ENCODE measurements at regions of chr22 and their contacts with region 1.

Region 1: GRCh38 chr22:41381329-41382097 is at the start of gene TEF:
- DNase-seq: peak; percentile 97
- H3K4me3 Mint-ChIP-seq: peak within 1 kb of the TSS; percentile 85
- H3K27ac Mint-ChIP-seq: peak within 1 kb of the TSS; percentile 93
- H3K4me1 Mint-ChIP-seq: peaks cover 6% of the 10 kb centered on the region
- H3K27me3 Mint-ChIP-seq: no peaks in the 10 kb centered on the region
- total RNA-seq, gene TEF: 1.6 and 2.1 TPM in 2 replicates

Region 2: GRCh38 chr22:41009202-41009943 is 372.1 kb before region 1 on chr22:
- intact Hi-C with region 1: no loop called
- DNase-seq: no peak
- H3K4me3 Mint-ChIP-seq: no peak overlapping the region
- H3K27ac Mint-ChIP-seq: no peak overlapping the region
- H3K4me1 Mint-ChIP-seq: no peaks in the 10 kb centered on the region
- H3K27me3 Mint-ChIP-seq: peaks cover 5% of the 10 kb centered on the region

Region 3: GRCh38 chr22:41204992-41205900 is 176.3 kb before region 1 on chr22 and contains the start of gene L3MBTL2:
- intact Hi-C with region 1: loop called (anchors 1 kb)
- DNase-seq: peak; percentile 98
- H3K4me3 Mint-ChIP-seq: peak within 1 kb of the TSS; percentile 97
- H3K27ac Mint-ChIP-seq: peak within 1 kb of the TSS; percentile 94
- H3K4me1 Mint-ChIP-seq: peaks cover 21% of the 10 kb centered on the region
- H3K27me3 Mint-ChIP-seq: peaks cover 12% of the 10 kb centered on the region
- total RNA-seq, gene L3MBTL2: 51.9 and 56.6 TPM in 2 replicates

Region 4: DNA sequence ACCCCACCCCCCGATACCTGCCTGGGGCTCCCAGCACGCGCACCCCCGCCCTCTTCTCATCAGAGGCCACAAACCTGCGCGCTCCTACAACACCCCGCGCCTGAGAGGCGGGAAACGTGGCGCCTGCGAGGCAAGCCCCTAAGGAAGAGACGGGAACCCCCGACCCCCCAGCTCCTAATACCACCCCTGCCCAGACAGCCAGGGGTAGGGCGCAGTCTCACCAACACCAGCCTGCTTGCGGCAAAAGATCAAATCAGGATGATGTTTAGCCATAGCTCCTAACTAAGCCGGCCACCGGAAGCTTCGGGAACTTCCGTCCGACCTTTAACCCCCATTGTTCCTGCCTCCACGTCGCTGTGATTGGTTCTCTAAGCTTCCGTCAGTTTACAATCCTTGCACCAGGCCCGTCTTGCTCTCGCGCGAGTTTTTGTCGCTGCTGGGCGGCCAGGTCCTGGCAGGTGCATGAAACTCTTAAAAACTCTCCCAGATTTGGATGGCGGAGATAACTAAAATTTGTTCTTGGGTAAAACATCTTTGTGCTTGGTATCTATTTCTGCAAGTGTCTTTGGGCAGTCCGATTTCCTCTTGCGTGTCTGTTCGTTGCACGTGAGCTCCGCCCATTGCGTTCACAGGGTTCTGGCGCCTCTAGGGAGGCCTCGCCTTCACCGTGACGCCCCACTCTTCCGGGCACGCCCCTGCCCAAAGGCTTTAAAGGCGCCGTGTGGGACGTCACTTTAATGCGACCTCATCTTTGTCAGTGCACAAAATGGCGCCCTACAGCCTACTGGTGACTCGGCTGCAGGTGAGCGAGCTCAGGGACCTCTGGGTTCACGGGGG is 87.1 kb after region 1 on chr22 and contains the starts of genes ACO2 and PHF5A:
- intact Hi-C with region 1: loop called (anchors 1 kb)
- DNase-seq: peak; percentile 98
- H3K4me3 Mint-ChIP-seq: peak within 1 kb of the TSS; percentile 87
- H3K27ac Mint-ChIP-seq: peak within 1 kb of the TSS; percentile 99
- H3K4me1 Mint-ChIP-seq: peaks cover 22% of the 10 kb centered on the region
- H3K27me3 Mint-ChIP-seq: no peaks in the 10 kb centered on the region
- total RNA-seq, gene ACO2: 99.1 and 101 TPM in 2 replicates
- total RNA-seq, gene PHF5A: 83.7 and 96.8 TPM in 2 replicates

Region 5: DNA sequence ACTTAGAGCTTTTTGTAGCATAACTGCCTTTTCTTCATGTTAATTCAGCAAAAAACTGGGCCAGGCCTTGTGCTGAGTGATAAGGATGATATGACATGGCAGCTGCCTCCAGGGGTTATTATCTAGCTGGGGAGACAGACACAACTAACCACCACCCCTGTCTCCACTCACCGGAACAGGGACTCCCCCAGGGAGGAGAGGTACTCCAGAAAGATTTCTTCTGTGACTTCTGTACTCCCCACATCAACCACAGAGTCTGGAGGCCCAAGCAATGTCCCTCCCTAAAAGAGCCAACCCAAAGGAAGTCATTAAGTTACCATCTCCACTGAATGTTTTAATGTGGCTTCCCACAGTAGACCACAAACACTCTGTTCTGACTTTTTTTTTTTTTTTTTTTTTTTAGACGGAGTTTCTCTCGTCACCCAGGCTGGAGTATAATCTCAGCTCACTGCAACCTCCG is 222.4 kb after region 1 on chr22:
- intact Hi-C with region 1: loop called (anchors 1 kb)
- DNase-seq: peak; percentile 66
- H3K4me3 Mint-ChIP-seq: no peak overlapping the region
- H3K27ac Mint-ChIP-seq: peak overlapping the region; percentile 62
- H3K4me1 Mint-ChIP-seq: peaks cover 44% of the 10 kb centered on the region
- H3K27me3 Mint-ChIP-seq: peaks cover 9% of the 10 kb centered on the region